K562 (cell line): ENCODE measurements at regions of chr7 and their contacts with region 1.

Region 1: DNA sequence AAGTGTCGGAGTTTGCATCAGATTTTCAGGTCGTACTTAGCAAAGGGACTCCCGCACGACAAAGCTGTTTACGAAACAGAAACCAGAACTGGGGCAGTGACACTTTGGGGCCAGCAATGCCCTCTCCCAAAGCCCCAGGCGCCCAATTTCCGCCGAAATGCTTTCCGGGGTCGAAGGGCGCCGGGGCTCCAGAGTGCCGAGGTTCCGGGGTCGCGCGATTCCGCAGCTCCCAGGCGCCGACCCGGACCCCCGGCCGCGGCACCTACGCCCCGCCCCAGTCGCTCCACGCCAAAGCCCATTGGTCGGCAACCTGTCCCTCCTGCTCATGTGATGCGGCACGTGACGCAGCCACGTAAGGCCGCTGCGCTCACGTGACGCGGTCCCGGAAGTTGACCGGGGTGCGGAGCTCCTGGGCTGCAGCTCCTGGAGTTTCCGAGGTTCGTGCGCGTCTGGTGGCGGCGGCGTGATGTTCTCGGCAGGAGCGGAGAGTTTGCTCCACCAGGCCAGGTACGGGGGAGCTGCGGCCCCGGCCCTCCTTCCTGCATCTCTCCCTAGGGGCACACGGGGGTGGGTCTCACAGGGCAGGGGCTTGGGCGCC is at the start of gene AP5Z1:
- DNase-seq: peak; percentile 97 to 99 (median 99)
- ATAC-seq: peak; percentile 97
- H3K4me3 ChIP-seq: peak within 1 kb of the TSS; percentile 84
- H3K27ac ChIP-seq: peak within 1 kb of the TSS; percentile 91
- H3K4me1 ChIP-seq: peaks cover 19 to 24% of the 10 kb centered on the region in 2 experiments
- H3K27me3 ChIP-seq: no peaks in the 10 kb centered on the region
- CTCF ChIP-seq: no peak
- EP300 ChIP-seq: peak; percentile 32; the same call in 1 of the 2 replicates
- POLR2A ChIP-seq: peak; percentile 83
- RAD21 ChIP-seq: no peak
- polyA plus RNA-seq, gene AP5Z1: 0.06 to 0.98 TPM

Region 2: DNA sequence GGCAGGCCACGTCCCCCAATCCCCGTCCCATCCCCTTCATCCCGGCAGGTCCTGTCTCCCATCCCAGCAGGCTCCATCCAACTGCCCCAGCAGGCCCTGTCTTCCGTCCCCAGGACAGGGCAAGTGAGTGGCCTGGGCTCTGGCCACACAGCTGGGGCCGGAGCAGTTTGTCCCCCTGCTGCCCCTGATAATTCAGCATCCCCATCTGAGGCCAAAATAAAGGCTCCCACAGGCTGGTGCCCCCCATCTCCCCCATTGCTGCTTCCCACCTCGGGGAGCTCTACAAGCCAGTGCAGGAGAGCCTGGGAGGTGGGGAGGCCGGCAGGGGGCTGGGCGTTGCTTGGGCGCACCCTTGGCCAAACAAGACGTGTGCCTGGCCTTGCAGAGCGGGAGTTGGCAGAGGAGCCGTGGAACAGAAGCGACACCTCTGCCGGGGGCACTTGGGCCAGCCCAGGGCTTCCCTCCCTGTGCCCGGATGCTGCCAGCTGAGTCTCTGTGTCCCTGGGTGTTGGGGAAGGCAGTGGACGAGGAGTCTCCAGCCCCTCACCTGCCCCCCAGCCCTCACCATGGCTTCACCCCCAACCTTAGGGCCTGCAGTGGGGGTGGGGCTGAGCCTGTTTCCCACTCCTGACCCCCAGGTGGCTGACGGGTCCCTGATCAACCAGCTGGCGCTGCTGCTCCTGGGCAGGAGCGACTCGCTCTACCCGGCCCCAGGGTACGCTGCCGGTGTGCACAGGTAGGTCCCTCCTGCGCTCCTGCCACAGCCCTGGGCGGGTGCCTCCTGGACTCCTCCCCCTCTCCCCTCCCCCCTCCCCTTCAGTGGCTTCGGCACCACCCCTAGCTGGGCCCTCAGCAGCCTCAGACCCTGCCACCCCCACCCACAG is 14.1 kb after region 1 on chr7:
- CTCF ChIA-PET with region 1: no interaction called
- POLR2A ChIA-PET with region 1: interaction called, 10 read pairs
- in situ Hi-C with region 1: no loop called
- intact Hi-C with region 1: no loop called
- DNase-seq: no peak
- ATAC-seq: no peak
- H3K4me3 ChIP-seq: no peak overlapping the region
- H3K27ac ChIP-seq: no peak overlapping the region
- H3K4me1 ChIP-seq: peaks cover 0 to 37% of the 10 kb centered on the region in 2 experiments; a peak in 2 of 5 replicates
- H3K27me3 ChIP-seq: no peaks in the 10 kb centered on the region
- CTCF ChIP-seq: no peak
- EP300 ChIP-seq: no peak
- POLR2A ChIP-seq: no peak
- RAD21 ChIP-seq: no peak